Activated naive CD4-positive, alpha-beta T cell treated with anti-CD3 and anti-CD28 coated beads, Interleukin-2, amount 10 ng/mL, durations not matched to agents 7 days and 5 days (primary cell): ENCODE measurements at regions of chr10 and their contacts with region 1.

Region 1: GRCh38 chr10:95693668-95694534 is at the start of gene TCTN3:
- DNase-seq: peak; percentile 97
- H3K4me3 Mint-ChIP-seq: peak within 1 kb of the TSS; percentile 85
- H3K27ac Mint-ChIP-seq: peak within 1 kb of the TSS; percentile 87
- H3K4me1 Mint-ChIP-seq: peaks cover 31% of the 10 kb centered on the region
- H3K27me3 Mint-ChIP-seq: peaks cover 8% of the 10 kb centered on the region

Region 2: GRCh38 chr10:95474228-95475002 is 219.5 kb before region 1 on chr10:
- CTCF ChIA-PET with region 1: no interaction called
- DNase-seq: no peak
- H3K4me3 Mint-ChIP-seq: no peak overlapping the region
- H3K27ac Mint-ChIP-seq: no peak overlapping the region
- H3K4me1 Mint-ChIP-seq: no peaks in the 10 kb centered on the region
- H3K27me3 Mint-ChIP-seq: peaks cover 7% of the 10 kb centered on the region

Region 3: DNA sequence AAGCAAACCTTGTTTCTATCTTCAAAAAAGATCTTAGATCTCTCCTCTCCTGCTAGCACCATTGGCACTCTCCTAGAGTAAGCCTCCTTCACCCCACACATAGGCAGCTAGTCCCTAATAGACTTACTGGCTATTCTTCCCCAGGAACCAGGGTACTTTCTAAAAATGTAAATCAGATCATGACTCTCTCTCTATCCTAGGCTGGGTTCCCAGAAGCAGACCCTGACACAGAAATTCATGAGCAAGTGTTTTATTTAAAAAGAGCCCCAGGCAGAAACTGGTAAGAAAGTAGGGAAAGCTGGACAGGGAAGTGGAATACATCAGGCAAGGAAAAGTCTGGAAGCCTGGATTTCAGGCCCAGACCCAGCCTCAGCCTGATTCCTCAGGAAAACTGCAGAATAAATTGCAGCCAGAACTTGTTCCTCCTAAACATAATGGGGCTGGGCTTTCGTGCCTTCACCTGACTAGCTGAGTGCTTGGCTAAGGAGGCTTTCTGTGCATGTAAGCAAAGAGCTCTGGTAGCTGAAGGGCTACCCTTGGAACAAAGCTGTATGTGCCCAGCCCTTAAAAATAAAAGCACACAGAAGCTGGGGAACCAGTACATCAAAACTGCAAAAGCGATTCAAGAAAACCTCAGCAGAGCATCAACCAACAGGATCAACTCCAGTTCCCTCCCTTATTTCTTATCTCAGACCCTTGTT is 113.9 kb before region 1 on chr10:
- CTCF ChIA-PET with region 1: no interaction called
- DNase-seq: no peak
- H3K4me3 Mint-ChIP-seq: no peak overlapping the region
- H3K27ac Mint-ChIP-seq: no peak overlapping the region
- H3K4me1 Mint-ChIP-seq: no peaks in the 10 kb centered on the region
- H3K27me3 Mint-ChIP-seq: peaks cover 11% of the 10 kb centered on the region

Region 4: GRCh38 chr10:95706986-95707385 is 13.1 kb after region 1 on chr10:
- CTCF ChIA-PET with region 1: interaction called, 10 read pairs
- DNase-seq: no peak
- H3K4me3 Mint-ChIP-seq: no peak overlapping the region
- H3K27ac Mint-ChIP-seq: no peak overlapping the region
- H3K4me1 Mint-ChIP-seq: no peaks in the 10 kb centered on the region
- H3K27me3 Mint-ChIP-seq: peaks cover 3% of the 10 kb centered on the region

Region 5: GRCh38 chr10:95721771-95722170 is 27.9 kb after region 1 on chr10:
- CTCF ChIA-PET with region 1: no interaction called
- DNase-seq: no peak
- H3K4me3 Mint-ChIP-seq: no peak overlapping the region
- H3K27ac Mint-ChIP-seq: no peak overlapping the region
- H3K4me1 Mint-ChIP-seq: no peaks in the 10 kb centered on the region
- H3K27me3 Mint-ChIP-seq: peaks cover 18% of the 10 kb centered on the region

Region 6: GRCh38 chr10:95832216-95833041 is 138.5 kb after region 1 on chr10:
- CTCF ChIA-PET with region 1: interaction called, 182 read pairs
- DNase-seq: peak; percentile 51
- H3K4me3 Mint-ChIP-seq: peak overlapping the region; percentile 64
- H3K27ac Mint-ChIP-seq: peak overlapping the region; percentile 94
- H3K4me1 Mint-ChIP-seq: peaks cover 25% of the 10 kb centered on the region
- H3K27me3 Mint-ChIP-seq: peaks cover 4% of the 10 kb centered on the region

Region 7: GRCh38 chr10:95841661-95842498 is 148.0 kb after region 1 on chr10:
- CTCF ChIA-PET with region 1: interaction called, 182 read pairs
- DNase-seq: peak; percentile 45
- H3K4me3 Mint-ChIP-seq: no peak overlapping the region
- H3K27ac Mint-ChIP-seq: no peak overlapping the region
- H3K4me1 Mint-ChIP-seq: peaks cover 11% of the 10 kb centered on the region
- H3K27me3 Mint-ChIP-seq: peaks cover 4% of the 10 kb centered on the region

Region 8: DNA sequence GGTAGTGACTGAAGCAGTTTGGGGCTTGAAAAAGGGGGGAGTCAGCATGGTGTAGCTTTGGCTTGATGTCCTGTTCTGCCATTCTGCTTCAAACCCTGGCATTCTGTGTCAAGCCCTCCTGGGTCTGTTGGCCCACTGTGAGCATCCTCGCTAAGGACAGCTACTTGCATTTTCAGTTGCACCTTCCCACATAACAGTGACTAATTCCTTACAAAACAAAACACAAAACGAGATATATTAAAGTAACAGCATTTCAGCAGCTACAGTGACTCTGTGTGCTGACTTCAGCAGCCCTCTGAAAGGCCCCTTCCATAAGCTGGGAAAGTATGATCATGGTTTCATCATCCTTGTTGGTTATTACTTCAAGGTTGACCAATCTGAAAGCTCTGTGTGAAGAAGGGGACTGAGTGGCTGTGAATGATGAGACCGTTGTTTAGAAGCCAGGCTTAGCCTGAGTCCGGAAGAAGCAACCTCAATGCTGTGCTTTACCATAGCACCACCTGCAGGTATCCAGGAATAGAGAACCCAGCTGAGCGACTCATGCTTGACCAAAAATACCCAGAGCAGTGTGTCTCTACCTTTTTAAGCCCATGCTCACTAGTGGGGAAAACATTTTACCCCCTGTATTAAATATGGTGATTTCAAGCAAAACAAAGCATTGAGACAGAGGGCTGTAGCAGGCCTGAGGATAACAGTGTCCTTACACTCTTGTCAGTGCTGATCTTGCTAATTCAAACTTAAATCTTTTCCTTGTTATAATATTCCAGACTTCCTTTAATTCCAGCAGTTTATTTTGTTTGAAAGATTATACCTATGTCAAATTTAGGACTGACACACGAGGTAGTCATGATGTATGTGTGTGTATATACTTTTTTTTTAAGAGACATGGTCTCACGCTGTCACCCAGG is 171.3 kb after region 1 on chr10:
- CTCF ChIA-PET with region 1: interaction called, 80 read pairs
- DNase-seq: peak; percentile 53
- H3K4me3 Mint-ChIP-seq: no peak overlapping the region
- H3K27ac Mint-ChIP-seq: no peak overlapping the region
- H3K4me1 Mint-ChIP-seq: peaks cover 11% of the 10 kb centered on the region
- H3K27me3 Mint-ChIP-seq: no peaks in the 10 kb centered on the region

Region 9: GRCh38 chr10:95873139-95873538 is 179.2 kb after region 1 on chr10:
- CTCF ChIA-PET with region 1: interaction called, 80 read pairs
- DNase-seq: no peak
- H3K4me3 Mint-ChIP-seq: no peak overlapping the region
- H3K27ac Mint-ChIP-seq: no peak overlapping the region
- H3K4me1 Mint-ChIP-seq: peaks cover under 1% of the 10 kb centered on the region
- H3K27me3 Mint-ChIP-seq: no peaks in the 10 kb centered on the region